Endothelial cell of umbilical vein (primary cell): ENCODE measurements at regions of chr17 and their contacts with region 1.

Region 1: GRCh38 chr17:6843241-6843880 is 11.8 kb upstream of the TEKT1 start:
- DNase-seq: peak; percentile 68
- H3K4me3 ChIP-seq: no peak overlapping the region
- H3K27ac ChIP-seq: no peak overlapping the region
- H3K4me1 ChIP-seq: no peaks in the 10 kb centered on the region
- H3K27me3 ChIP-seq: peaks cover 27 to 31% of the 10 kb centered on the region in 2 experiments
- CTCF ChIP-seq: peak; percentile 21 to 26
- POLR2A ChIP-seq: no peak

Region 2: DNA sequence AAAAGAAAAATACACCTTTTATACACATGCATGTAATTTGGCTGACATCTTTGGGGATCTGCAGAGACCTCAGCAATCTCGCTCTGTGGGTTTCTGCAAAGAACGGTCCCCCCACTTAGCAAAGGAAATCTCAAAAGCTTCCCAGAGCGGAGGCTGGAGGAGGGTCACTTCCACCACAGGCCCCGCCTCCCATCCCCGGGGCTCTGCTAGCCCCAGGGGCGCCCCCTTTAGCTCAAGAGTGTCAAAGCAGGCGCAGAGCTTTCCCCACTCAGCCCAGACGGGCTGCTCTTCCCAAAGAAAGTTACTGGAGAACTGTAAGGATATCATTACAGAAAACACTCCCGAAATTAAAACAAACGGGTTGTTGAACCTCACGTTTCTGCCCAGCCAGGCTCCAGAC is 141.6 kb before region 1 on chr17:
- CTCF ChIA-PET with region 1: interaction called, 19 read pairs
- POLR2A ChIA-PET with region 1: no interaction called
- dilution Hi-C with region 1: no loop called
- intact Hi-C with region 1: no loop called
- DNase-seq: peak; percentile 10
- H3K4me3 ChIP-seq: no peak overlapping the region
- H3K27ac ChIP-seq: no peak overlapping the region
- H3K4me1 ChIP-seq: no peaks in the 10 kb centered on the region
- H3K27me3 ChIP-seq: no peaks in the 10 kb centered on the region
- CTCF ChIP-seq: peak; percentile 26 to 57
- POLR2A ChIP-seq: no peak

Region 3: GRCh38 chr17:6786618-6787017 is 56.7 kb before region 1 on chr17:
- CTCF ChIA-PET with region 1: interaction called, 21 read pairs
- POLR2A ChIA-PET with region 1: no interaction called
- dilution Hi-C with region 1: no loop called
- intact Hi-C with region 1: no loop called
- DNase-seq: peak; percentile 93
- H3K4me3 ChIP-seq: peak overlapping the region in 2 of 3 experiments; percentile 30 to 42
- H3K27ac ChIP-seq: peak overlapping the region; percentile 33
- H3K4me1 ChIP-seq: peaks cover 6% of the 10 kb centered on the region
- H3K27me3 ChIP-seq: peaks cover 0 to 15% of the 10 kb centered on the region in 2 experiments
- CTCF ChIP-seq: no peak
- POLR2A ChIP-seq: no peak

Region 4: DNA sequence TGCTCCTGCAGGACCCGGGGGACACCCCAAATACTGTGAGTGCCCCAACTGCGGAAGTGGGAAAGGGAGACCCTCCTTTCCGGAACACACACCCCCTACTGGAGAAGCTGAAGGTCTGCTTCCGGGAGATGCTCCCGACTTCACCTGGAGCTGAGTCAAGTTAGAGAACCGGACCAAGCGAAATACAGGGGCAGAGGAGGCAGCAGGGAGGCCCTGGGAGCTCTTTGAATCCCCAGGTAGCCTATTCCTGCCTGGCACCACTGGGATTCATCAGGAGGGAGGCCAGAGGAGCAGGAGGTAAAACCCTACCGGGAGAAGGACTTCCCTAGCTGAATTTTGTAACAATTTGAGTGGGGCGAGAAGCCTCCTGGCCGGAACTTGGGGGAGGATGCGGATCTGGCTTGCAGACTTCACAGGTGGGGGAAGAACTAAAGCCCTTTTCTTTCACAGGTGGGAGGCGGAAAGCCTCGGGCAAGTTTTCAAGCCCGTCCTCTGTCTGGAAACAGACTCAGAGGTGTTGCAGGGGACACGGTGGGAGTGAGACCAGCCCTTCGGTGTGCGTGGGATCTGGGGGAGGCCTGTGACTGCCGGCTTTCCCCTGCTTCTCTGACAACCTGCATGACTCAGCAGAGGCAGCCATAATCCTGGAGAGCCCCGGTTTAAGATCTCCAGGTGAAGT is 10.5 kb after region 1 on chr17:
- CTCF ChIA-PET with region 1: interaction called, 15 read pairs
- POLR2A ChIA-PET with region 1: no interaction called
- dilution Hi-C with region 1: no loop called
- intact Hi-C with region 1: no loop called
- DNase-seq: no peak
- H3K4me3 ChIP-seq: no peak overlapping the region
- H3K27ac ChIP-seq: no peak overlapping the region
- H3K4me1 ChIP-seq: no peaks in the 10 kb centered on the region
- H3K27me3 ChIP-seq: peaks cover 11 to 12% of the 10 kb centered on the region in 2 experiments
- CTCF ChIP-seq: no peak
- POLR2A ChIP-seq: no peak

Region 5: DNA sequence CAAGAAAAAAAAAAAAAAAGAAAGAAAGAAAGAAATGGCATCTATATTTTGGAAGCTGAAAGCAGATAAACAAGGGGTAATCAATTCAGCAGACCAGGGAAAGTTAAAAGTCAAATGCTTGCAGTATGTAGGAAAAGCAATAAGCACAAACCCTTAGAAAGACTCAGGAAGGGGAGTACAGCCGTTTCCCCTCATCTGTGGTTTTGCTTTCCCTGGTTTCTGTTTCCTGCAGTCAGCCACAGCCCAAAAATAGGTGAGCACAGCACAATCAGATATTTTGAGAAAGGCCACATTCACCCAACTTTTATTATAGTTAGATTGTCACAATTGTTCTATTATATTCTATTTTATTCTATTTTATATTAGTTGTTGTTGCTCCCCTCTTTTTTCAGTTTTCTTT is 138.1 kb after region 1 on chr17:
- CTCF ChIA-PET with region 1: no interaction called
- POLR2A ChIA-PET with region 1: no interaction called
- dilution Hi-C with region 1: no loop called
- intact Hi-C with region 1: no loop called
- DNase-seq: no peak
- H3K4me3 ChIP-seq: no peak overlapping the region
- H3K27ac ChIP-seq: no peak overlapping the region
- H3K4me1 ChIP-seq: no peaks in the 10 kb centered on the region
- H3K27me3 ChIP-seq: peaks cover 0 to 5% of the 10 kb centered on the region in 2 experiments
- CTCF ChIP-seq: no peak
- POLR2A ChIP-seq: no peak

Region 6: GRCh38 chr17:7004398-7005253 is 161.3 kb after region 1 on chr17:
- CTCF ChIA-PET with region 1: interaction called, 13 read pairs
- POLR2A ChIA-PET with region 1: no interaction called
- dilution Hi-C with region 1: no loop called
- intact Hi-C with region 1: no loop called
- DNase-seq: peak; percentile 66
- H3K4me3 ChIP-seq: no peak overlapping the region
- H3K27ac ChIP-seq: no peak overlapping the region
- H3K4me1 ChIP-seq: no peaks in the 10 kb centered on the region
- H3K27me3 ChIP-seq: no peaks in the 10 kb centered on the region
- CTCF ChIP-seq: peak; percentile 53 to 58
- POLR2A ChIP-seq: no peak